ENCODE measurements at regions of chr12 and their contacts with region 1.

Region 1: DNA sequence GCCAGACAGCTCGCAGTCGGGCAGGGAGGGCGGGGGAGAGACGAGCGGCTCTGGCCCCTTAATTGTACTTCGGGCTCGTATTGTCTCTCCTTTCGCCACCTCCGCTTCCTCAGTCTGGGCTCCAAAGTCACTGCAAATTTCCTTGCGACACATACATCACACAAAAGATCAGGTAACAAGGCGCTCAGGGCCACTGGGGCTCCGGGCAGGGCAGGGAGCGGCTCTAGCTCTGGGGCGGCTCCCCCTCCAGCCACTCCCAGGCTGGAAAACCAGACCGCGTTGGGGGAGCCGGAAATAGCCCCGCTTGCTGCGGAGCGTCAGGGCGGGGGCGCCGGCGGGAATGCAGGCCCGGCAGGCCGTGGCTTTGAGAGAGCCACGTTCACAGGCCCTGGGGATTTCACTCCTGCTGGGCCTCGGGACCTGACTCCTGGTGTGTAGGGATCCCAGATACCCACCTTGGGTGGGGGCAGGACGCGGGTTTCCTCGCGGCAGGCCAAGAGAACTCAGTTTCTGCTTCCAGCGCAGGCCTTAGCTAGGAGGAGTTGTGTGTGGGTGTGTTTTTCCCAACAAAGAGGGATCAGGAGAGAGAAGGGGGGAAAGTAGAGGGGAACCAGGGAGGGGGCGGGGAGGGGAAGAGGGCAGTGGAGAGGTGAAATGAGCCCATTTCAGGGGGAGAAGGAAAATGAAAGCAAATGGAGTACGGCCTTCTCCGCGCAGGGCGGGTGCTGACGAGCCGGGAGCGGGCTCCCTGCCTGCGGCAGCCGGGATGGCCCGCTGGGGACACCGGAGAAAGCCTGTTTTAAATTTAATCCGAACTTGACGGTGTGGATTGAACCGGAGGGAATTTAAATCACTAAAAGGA is 4.4 kb upstream of the HOXC9 start:
- DNase-seq: no peak
- H3K4me3 Mint-ChIP-seq: peak overlapping the region; percentile 80
- H3K27ac Mint-ChIP-seq: peak overlapping the region; percentile 76
- H3K4me1 Mint-ChIP-seq: peaks cover 22% of the 10 kb centered on the region
- H3K27me3 Mint-ChIP-seq: peaks cover 87% of the 10 kb centered on the region

Region 2: GRCh38 chr12:53965281-53966084 is 30.1 kb before region 1 on chr12:
- intact Hi-C with region 1: loop called (anchors 2 kb)
- DNase-seq: no peak
- H3K4me3 Mint-ChIP-seq: no peak overlapping the region
- H3K27ac Mint-ChIP-seq: peak overlapping the region; percentile 30
- H3K4me1 Mint-ChIP-seq: peaks cover 6% of the 10 kb centered on the region
- H3K27me3 Mint-ChIP-seq: peaks cover 90% of the 10 kb centered on the region

Region 3: DNA sequence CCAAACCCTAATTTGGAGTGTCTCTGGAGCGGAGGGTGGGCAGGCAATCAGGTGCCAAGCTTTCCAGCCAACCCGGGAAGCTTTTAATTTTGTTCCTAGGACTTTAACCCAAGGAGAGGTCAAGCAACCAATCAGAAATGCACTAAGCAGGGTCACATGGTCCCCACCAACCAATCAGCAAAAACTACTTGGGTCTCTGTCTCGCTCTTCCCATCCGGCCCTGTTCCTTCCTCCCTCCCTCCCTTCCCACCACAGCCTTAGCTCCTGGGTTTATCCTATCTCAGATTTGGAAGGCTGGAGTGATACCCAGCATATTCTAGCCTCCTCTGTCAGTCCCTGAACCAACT is 44.5 kb after region 1 on chr12:
- intact Hi-C with region 1: no loop called
- DNase-seq: no peak
- H3K4me3 Mint-ChIP-seq: no peak overlapping the region
- H3K27ac Mint-ChIP-seq: no peak overlapping the region
- H3K4me1 Mint-ChIP-seq: peaks cover 7% of the 10 kb centered on the region
- H3K27me3 Mint-ChIP-seq: peaks cover 72% of the 10 kb centered on the region

Region 4: DNA sequence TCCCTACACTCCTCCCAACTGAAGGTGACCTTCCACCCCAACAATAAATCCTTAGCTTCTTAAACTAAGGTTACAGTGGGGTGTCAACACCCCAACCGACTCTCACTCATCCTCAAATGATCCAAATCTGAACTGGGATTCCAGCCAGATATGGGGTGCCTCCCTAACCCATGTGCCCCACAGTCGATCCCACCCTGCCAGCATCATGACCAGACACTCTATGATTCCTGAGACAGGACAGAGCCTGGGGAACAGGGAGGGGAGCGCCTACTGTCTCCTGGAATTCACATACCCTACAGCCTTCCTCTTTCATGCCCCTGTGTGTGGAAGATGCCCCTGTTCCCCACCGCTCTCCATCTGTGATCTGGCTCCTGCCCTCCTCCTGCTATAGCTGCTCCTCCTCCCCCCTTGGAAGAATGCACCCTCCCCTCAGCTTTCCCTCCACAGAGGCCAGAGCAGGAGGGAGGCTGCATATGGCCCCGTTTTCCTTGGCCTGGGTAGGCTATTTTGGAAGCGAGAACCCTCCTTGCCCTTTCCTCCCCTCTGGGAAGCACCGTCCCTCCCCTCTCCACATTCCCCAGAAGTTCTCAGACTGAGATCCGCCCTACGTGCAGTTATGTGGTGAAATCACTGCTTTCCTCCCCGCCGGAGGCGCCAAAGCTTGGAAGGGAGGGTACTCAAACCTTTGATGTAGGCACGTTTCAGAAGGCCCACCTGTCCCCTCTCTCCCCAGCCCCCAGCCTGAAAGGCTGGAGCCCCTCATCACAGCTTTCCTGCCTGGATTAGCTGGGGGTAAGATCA is 145.2 kb after region 1 on chr12:
- intact Hi-C with region 1: no loop called
- DNase-seq: no peak
- H3K4me3 Mint-ChIP-seq: no peak overlapping the region
- H3K27ac Mint-ChIP-seq: no peak overlapping the region
- H3K4me1 Mint-ChIP-seq: no peaks in the 10 kb centered on the region
- H3K27me3 Mint-ChIP-seq: peaks cover 36% of the 10 kb centered on the region

Measured in activated T-helper 1 cell treated with anti-CD3 and anti-CD28 coated beads, Interleukin-12 subunit alpha, Interleukin-12 subunit beta, Interleukin-2, Interleukin-4 antibody, amounts not matched to agents 30 ng/mL and 10 ng/mL and 1 ng/mL, durations not matched to agents 14 hours and 24 hours and 36 hours (primary cell).